Activated naive CD4-positive, alpha-beta T cell treated with anti-CD3 and anti-CD28 coated beads for 36 hours (primary cell): ENCODE measurements at regions of chr10 and their contacts with region 1.

Region 1: DNA sequence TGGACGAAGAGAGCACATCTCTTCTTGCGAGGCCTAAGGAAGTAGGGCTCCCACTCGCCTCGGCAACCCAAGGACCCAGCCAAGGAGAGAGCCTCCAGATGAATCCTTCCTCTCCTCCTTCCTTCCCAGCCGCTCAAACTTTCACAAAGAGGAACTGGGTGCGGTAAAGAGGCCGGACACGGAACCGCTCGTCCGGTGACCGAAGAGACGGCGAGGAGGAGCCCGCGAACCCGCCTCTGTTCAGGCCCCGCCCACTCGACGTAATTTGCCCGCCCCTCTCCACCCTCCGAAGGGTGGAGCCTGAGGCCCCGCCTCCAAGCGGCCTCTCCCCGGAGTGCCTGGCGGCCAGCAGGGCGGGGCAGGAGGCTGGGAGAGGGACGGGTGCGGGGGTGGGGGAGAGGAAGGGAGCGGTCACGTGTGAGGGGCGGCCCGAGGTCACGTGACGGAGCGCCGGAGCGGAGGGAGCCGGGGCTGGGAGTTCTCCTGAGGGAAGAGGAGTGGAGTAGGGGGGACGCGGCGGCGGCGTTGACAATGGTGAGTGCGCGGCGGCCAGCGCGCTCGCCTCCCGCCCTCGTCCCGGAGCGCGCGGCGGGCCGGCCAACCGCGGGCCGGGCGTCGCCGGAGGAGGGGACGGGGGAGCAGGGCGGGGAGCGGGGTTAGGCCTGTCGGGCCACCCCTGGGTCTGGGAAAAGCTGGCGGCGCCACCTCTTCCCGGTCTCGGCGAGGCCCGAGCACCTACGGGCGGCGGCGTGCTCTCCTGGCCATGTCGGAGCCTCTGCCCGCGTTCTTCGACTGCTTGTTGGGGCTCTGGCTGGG is at the start of gene VPS26A:
- DNase-seq: peak; percentile 99
- H3K4me3 Mint-ChIP-seq: peak within 1 kb of the TSS; percentile 95
- H3K27ac Mint-ChIP-seq: peak within 1 kb of the TSS; percentile 93
- H3K4me1 Mint-ChIP-seq: peaks cover 38% of the 10 kb centered on the region
- H3K27me3 Mint-ChIP-seq: no peaks in the 10 kb centered on the region
- total RNA-seq, gene VPS26A: 26.2 to 27.9 TPM

Region 2: GRCh38 chr10:68331455-68332258 is 792.3 kb before region 1 on chr10 and contains the start of gene HNRNPH3:
- CTCF ChIA-PET with region 1: no interaction called
- intact Hi-C with region 1: loop called (anchors 2 kb)
- DNase-seq: peak; percentile 99
- H3K4me3 Mint-ChIP-seq: peak within 1 kb of the TSS; percentile 100
- H3K27ac Mint-ChIP-seq: peak within 1 kb of the TSS; percentile 100
- H3K4me1 Mint-ChIP-seq: peaks cover 40% of the 10 kb centered on the region
- H3K27me3 Mint-ChIP-seq: no peaks in the 10 kb centered on the region
- total RNA-seq, gene HNRNPH3: 145 to 150 TPM

Region 3: GRCh38 chr10:68955832-68956532 is 168.0 kb before region 1 on chr10 and contains the start of gene DDX21:
- CTCF ChIA-PET with region 1: interaction called, 5 read pairs
- intact Hi-C with region 1: loop called (anchors 1 kb)
- DNase-seq: peak; percentile 94
- H3K4me3 Mint-ChIP-seq: peak within 1 kb of the TSS; percentile 100
- H3K27ac Mint-ChIP-seq: peak within 1 kb of the TSS; percentile 100
- H3K4me1 Mint-ChIP-seq: peaks cover 44% of the 10 kb centered on the region
- H3K27me3 Mint-ChIP-seq: no peaks in the 10 kb centered on the region
- total RNA-seq, gene DDX21: 155 to 164 TPM

Region 4: DNA sequence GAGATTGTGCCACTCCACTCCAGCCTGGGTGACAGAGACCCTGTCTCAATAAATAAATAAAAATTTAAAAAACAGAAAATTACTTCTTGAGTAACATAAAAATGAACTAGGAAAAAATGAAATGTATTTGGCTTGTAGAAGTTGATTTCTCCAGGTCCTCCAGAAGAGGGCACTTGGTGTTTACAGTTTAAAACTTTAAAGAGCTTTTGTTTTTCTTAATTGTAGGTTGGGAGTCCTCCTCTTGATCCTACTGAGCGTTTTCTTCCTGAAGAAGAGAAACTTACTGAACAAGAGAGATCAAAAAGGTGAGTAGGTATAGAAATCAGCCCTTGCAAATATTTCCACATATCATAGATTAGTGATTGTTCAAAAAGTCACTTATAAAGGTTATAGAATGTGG is 119.1 kb before region 1 on chr10:
- CTCF ChIA-PET with region 1: interaction called, 22 read pairs
- intact Hi-C with region 1: loop called (anchors 1 kb)
- DNase-seq: no peak
- H3K4me3 Mint-ChIP-seq: no peak overlapping the region
- H3K27ac Mint-ChIP-seq: no peak overlapping the region
- H3K4me1 Mint-ChIP-seq: peaks cover 6% of the 10 kb centered on the region
- H3K27me3 Mint-ChIP-seq: no peaks in the 10 kb centered on the region

Region 5: DNA sequence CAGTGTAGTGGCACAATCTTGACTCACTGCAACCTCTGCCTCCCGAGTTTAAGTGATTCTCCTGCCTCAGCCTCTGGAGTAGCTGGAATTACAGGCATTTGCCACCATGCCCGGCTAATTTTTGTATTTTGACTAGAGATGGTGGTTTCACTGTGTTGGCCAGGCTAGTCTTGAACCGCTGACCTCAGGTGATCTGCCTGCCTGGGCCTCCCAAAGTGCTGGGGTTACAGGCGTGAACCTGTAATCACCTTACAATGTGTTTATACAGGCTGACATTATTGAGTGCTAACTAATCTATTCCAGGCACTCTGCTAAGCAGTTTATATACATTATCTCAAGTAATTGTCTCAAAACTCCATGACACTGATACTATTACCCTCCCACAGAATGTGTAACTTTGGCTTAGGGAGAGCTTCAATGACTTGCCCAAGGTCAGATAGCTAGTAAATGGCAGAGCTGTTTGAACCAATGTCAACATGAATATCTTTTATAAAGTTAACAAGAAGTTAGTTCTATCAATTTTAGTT is 98.5 kb before region 1 on chr10:
- CTCF ChIA-PET with region 1: no interaction called
- intact Hi-C with region 1: no loop called
- DNase-seq: no peak
- H3K4me3 Mint-ChIP-seq: no peak overlapping the region
- H3K27ac Mint-ChIP-seq: no peak overlapping the region
- H3K4me1 Mint-ChIP-seq: peaks cover 9% of the 10 kb centered on the region
- H3K27me3 Mint-ChIP-seq: no peaks in the 10 kb centered on the region

Region 6: GRCh38 chr10:69092959-69093850 is 30.8 kb before region 1 on chr10:
- CTCF ChIA-PET with region 1: interaction called, 4 read pairs
- intact Hi-C with region 1: loop called (anchors 1 kb)
- DNase-seq: peak; percentile 95
- H3K4me3 Mint-ChIP-seq: peak overlapping the region; percentile 32
- H3K27ac Mint-ChIP-seq: peak overlapping the region; percentile 81
- H3K4me1 Mint-ChIP-seq: peaks cover 52% of the 10 kb centered on the region
- H3K27me3 Mint-ChIP-seq: no peaks in the 10 kb centered on the region

Region 7: GRCh38 chr10:69392481-69393000 is 268.6 kb after region 1 on chr10:
- CTCF ChIA-PET with region 1: no interaction called
- intact Hi-C with region 1: loop called (anchors 1 kb)
- DNase-seq: peak; percentile 92
- H3K4me3 Mint-ChIP-seq: no peak overlapping the region
- H3K27ac Mint-ChIP-seq: peak overlapping the region; percentile 76
- H3K4me1 Mint-ChIP-seq: peaks cover 23% of the 10 kb centered on the region
- H3K27me3 Mint-ChIP-seq: no peaks in the 10 kb centered on the region